Gastrocnemius medialis (tissue), 4 donors: ENCODE measurements at regions of chr1 and their contacts with region 1.

Region 1: DNA sequence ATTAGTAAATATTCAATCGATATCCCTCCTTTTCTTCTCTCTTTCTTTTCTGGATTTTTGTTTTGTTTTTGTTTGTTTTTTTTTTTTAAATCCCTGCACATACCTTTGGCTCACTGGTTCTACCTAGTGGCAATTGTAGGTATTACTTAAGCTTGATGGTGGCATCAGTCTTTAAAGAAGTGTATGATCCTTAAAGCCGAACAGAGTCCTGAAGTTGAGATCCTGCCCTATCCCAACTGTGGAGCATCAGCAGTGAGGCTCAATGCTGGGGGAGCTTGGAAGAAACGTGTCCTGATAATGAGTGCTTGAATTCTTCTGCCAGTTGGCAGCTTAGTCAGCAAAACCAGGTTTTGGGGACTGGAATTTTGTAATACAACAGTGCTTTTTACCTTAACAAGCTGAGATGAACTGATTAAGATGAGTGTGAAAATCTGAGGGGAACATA is 60.8 kb downstream of the FASLG start:
- DNase-seq: no peak
- ATAC-seq: no peak
- H3K4me3 ChIP-seq: no peak overlapping the region
- H3K27ac ChIP-seq: no peak overlapping the region
- H3K4me1 ChIP-seq: no peaks in the 10 kb centered on the region
- H3K27me3 ChIP-seq: no peaks in the 10 kb centered on the region
- CTCF ChIP-seq: peak in 3 of 5 experiments; percentile 42 to 48 (median 46)
- POLR2A ChIP-seq: no peak

Region 2: DNA sequence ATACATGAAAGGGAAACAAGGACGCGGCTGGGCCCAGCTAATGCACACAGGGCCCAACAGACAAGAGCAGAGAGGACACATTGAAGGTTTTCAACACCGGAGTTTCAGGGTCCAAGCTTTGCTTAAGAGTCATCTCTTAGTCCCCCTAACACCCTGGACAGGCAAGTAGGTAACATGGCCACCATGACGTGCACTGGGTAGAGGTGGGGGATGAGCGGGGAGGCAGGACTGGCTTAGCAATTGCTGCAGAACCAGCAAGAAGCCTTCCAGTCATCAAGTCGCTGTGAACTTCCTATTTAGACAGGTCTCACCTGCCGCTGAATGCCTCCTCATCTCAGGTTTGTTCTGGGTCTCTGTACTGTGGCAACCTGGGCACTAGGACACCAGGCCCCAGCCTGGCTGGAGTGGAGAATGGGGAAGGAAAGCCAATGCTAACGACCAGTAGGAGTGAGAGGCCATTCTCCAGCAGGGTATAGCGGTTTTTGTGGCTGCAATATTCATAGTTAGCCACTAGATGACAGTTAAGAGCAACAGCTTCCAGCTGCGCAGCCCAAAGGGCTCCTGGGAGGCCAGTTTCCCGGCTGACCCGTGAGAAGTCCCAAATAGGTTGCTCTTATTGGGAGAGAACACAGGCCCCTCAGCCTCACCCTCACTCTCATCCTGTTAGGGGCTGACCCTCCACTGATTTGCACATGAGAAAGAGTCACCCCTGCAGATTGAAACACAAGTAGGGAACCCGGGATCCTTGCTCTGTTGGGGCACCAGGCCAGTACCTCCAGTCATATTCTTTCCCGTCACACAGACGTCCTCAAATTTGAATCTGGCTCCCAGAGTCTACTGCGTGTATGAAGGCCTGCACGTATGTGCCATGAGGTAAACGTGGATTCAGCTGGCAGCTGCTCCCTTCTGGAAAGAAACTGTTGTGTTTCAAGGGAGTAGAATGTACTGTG is 269.9 kb before region 1 on chr1:
- in situ Hi-C with region 1: loop called in 1 of 4 experiments (anchors 25 kb)
- intact Hi-C with region 1: no loop called
- DNase-seq: peak; percentile 12 to 22
- ATAC-seq: peak; percentile 68 to 76
- H3K4me3 ChIP-seq: no peak overlapping the region
- H3K27ac ChIP-seq: no peak overlapping the region
- H3K4me1 ChIP-seq: peaks cover 36 to 48% of the 10 kb centered on the region in 2 donors
- H3K27me3 ChIP-seq: no peaks in the 10 kb centered on the region
- CTCF ChIP-seq: peak; percentile 32 to 70 (median 66)
- POLR2A ChIP-seq: no peak

Region 3: GRCh38 chr1:172609528-172609927 is 110.2 kb before region 1 on chr1:
- in situ Hi-C with region 1: no loop called
- intact Hi-C with region 1: loop called (anchors 5 kb)
- DNase-seq: no peak
- ATAC-seq: no peak
- H3K4me3 ChIP-seq: no peak overlapping the region
- H3K27ac ChIP-seq: no peak overlapping the region
- H3K4me1 ChIP-seq: no peaks in the 10 kb centered on the region
- H3K27me3 ChIP-seq: no peaks in the 10 kb centered on the region
- CTCF ChIP-seq: no peak
- POLR2A ChIP-seq: no peak

Region 4: DNA sequence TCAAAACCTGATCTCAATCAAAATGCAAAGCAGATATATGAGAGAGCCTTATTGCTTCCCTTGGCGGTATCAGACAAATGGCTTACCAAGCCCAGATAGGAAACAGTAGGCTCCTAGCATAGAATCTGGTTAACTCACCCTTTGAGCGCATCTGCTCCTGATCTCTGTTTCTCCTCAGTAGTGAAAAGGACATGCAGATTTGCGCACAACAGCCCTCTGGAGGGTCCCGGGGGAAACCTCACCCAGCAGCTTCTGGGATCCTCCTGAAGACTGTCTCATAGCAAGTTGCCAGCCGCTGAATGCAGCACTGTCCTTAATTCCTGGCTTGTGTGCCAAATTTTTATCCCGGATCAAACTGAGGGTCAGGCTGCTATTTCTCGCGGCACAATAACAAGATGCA is 131.4 kb after region 1 on chr1:
- in situ Hi-C with region 1: no loop called
- intact Hi-C with region 1: no loop called
- DNase-seq: no peak
- ATAC-seq: no peak
- H3K4me3 ChIP-seq: no peak overlapping the region
- H3K27ac ChIP-seq: no peak overlapping the region
- H3K4me1 ChIP-seq: no peaks in the 10 kb centered on the region
- H3K27me3 ChIP-seq: no peaks in the 10 kb centered on the region
- CTCF ChIP-seq: no peak
- POLR2A ChIP-seq: no peak